ENCODE measurements at regions of chr12 and their contacts with region 1.

Region 1: DNA sequence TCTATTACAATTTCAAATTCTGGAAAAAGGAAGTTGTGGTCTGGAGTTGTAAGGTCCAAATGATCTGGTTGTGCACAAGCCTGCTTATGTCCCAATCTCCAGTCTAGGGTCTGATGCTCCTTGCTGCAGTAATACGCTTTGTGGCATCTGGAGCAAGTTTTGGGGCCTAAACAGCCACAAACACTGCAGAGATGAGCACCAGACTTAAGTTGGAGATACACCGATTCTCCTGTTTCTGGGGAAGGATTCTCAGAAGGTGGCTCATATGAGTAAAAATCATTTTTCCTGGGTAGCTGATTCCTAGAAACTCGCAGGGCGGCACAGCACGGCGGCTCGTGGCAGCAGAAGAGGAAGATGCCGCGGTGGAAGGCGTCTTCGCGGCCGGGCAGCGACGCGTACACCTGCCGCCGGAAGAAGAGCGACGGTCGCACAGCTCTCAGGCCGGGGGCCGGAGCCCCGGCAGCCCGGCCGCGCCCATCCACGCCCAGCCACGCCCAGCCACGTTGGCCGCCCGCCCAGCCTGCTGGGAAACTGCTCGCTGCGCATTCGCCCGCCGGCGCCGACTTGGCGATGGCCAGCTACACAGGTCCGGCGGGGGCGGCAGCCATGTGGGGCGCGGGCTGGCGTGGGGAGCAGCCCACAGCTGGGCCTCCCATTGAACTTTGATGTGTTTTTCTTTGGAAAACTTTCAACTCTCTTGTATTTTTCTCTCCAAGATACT is 129.0 kb downstream of the ASCL4 start:
- DNase-seq: peak; percentile 73
- ATAC-seq: peak; percentile 97
- H3K4me3 ChIP-seq: peak overlapping the region in 4 of 5 experiments; percentile 18 to 51 (median 34)
- H3K4me3 Mint-ChIP-seq: peak overlapping the region; percentile 84
- H3K27ac ChIP-seq: no peak overlapping the region
- H3K27ac Mint-ChIP-seq: peak overlapping the region; percentile 77
- H3K4me1 ChIP-seq: peaks cover 7 to 13% of the 10 kb centered on the region in 2 donors
- H3K4me1 Mint-ChIP-seq: peaks cover 13% of the 10 kb centered on the region
- H3K27me3 ChIP-seq: peaks cover 0 to 43% (median 30%) of the 10 kb centered on the region in 4 experiments
- H3K27me3 Mint-ChIP-seq: peaks cover 47% of the 10 kb centered on the region
- CTCF ChIP-seq: no peak

Region 2: GRCh38 chr12:107731366-107731765 is 172.1 kb before region 1 on chr12:
- CTCF ChIA-PET with region 1: no interaction called
- POLR2A ChIA-PET with region 1: interaction called, 10 read pairs
- intact Hi-C with region 1: no loop called
- DNase-seq: peak; percentile 79
- ATAC-seq: peak; percentile 94
- H3K4me3 ChIP-seq: peak overlapping the region in 1 of 5 experiments; percentile 30
- H3K4me3 Mint-ChIP-seq: peak overlapping the region; percentile 76
- H3K27ac ChIP-seq: peak overlapping the region; percentile 94
- H3K27ac Mint-ChIP-seq: peak overlapping the region; percentile 96
- H3K4me1 ChIP-seq: peaks cover 33 to 38% of the 10 kb centered on the region in 2 donors
- H3K4me1 Mint-ChIP-seq: peaks cover 75% of the 10 kb centered on the region
- H3K27me3 ChIP-seq: no peaks in the 10 kb centered on the region
- H3K27me3 Mint-ChIP-seq: no peaks in the 10 kb centered on the region
- CTCF ChIP-seq: no peak